ENCODE measurements at regions of chr3 and their contacts with region 1.

Region 1: DNA sequence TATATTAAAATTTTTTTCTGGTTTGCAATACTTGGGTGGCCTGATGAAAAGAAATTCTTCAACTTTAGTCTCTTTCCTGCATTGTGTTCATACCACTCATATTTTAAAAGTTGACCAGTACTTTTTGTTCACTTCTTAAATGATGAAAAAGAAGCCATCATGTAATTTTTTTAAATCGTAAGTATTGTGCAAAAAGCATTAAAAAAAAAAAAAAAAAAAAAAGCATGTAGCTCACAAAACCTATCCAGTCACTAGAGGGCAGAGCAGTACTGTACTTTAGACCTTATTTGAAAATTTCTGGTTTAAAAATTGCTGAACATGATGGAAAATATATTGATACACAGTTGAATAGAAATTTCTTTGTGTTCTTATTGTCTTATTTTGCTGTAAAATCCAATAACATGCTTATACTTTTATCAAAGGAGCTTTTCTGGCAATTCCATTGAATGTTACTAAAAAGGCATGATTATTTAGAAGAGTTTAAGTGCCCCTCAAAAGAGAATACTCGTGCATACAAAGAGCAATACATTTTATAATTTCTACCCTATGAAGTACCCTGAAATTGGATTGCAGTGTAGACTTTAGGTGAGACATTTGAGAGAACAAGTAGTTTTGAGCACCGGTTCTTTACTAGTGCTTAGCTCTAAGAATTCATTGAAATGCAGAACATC is 137.7 kb downstream of the BBX start:
- DNase-seq: peak; percentile 56
- H3K4me3 ChIP-seq: no peak overlapping the region
- H3K27ac ChIP-seq: no peak overlapping the region
- H3K4me1 ChIP-seq: peaks cover 35% of the 10 kb centered on the region
- H3K27me3 ChIP-seq: no peaks in the 10 kb centered on the region
- CTCF ChIP-seq: peak; percentile 34 to 46
- POLR2A ChIP-seq: no peak

Region 2: GRCh38 chr3:107068980-107069379 is 591.5 kb before region 1 on chr3:
- CTCF ChIA-PET with region 1: no interaction called
- POLR2A ChIA-PET with region 1: no interaction called
- dilution Hi-C with region 1: no loop called
- intact Hi-C with region 1: no loop called
- DNase-seq: peak; percentile 73
- H3K4me3 ChIP-seq: no peak overlapping the region
- H3K27ac ChIP-seq: no peak overlapping the region
- H3K4me1 ChIP-seq: peaks cover 14% of the 10 kb centered on the region
- H3K27me3 ChIP-seq: no peaks in the 10 kb centered on the region
- CTCF ChIP-seq: no peak
- POLR2A ChIP-seq: no peak

Region 3: DNA sequence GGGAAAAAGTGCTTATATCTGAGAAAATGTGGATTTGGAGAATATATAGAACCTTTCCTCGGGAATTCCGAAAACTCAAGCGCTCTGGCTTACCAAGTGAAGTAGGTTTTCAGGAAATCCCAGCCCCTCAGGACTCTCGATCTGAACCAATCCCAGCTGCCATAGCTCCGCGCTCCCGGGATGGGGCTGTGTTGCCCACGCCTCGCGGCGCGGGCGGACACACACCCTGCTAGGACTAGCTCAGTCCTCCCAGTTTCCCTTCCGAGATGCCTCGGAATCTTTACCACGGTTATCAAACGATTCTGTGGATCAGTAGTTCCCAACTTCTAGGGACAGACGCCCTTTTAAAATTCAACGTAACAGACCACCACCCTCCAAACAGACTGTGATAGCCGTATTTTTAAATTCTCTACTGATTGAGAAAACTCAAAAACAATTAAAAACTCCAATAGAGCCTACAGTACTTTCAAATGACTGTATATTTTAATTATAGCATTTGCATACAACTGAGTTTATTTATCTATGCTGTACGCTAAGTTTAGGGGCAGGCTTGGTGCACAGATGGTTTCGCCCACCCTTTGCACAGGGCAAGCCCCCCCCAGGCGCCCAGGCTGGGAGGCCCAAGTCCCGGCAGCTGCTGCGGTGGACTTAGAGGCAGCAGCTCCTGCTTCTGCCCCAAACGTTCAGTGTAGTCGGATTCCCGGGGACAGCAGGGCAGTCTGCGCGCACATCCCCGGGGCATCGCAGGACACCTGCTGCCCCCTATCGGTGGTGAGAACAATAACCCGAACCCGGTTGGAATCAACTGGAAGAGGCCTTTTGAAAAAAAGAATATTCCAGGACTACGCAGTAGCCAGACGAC is 230.9 kb before region 1 on chr3:
- CTCF ChIA-PET with region 1: interaction called, 4 read pairs
- POLR2A ChIA-PET with region 1: no interaction called
- dilution Hi-C with region 1: no loop called
- intact Hi-C with region 1: loop called (anchors 10 kb)
- DNase-seq: peak; percentile 83
- H3K4me3 ChIP-seq: peak overlapping the region; percentile 21 to 75 (median 32)
- H3K27ac ChIP-seq: no peak overlapping the region
- H3K4me1 ChIP-seq: peaks cover 20% of the 10 kb centered on the region
- H3K27me3 ChIP-seq: peaks cover 0 to 3% of the 10 kb centered on the region in 2 experiments
- CTCF ChIP-seq: peak; percentile 90 to 92
- POLR2A ChIP-seq: no peak

Region 4: DNA sequence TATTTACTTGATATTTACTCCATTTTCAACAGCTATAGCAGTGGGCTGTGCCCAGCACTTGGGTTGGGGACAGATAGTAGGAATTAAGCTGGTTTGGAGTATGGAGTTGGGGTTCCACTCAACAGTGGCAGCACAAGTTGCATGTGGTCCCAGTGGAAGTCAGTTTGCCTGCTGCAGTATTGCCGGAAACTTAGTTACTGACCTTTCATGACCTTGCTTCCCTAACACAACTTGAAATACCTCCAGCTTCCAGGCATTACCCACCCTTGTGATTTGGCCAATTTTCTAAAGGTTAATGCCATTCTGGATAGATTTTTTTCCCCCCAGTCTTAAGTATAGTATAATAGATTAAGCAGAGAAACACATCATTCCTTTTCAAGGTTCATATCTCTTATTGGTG is 69.7 kb before region 1 on chr3:
- CTCF ChIA-PET with region 1: interaction called, 11 read pairs
- POLR2A ChIA-PET with region 1: no interaction called
- dilution Hi-C with region 1: no loop called
- intact Hi-C with region 1: no loop called
- DNase-seq: peak; percentile 56
- H3K4me3 ChIP-seq: no peak overlapping the region
- H3K27ac ChIP-seq: no peak overlapping the region
- H3K4me1 ChIP-seq: peaks cover 9% of the 10 kb centered on the region
- H3K27me3 ChIP-seq: no peaks in the 10 kb centered on the region
- CTCF ChIP-seq: no peak
- POLR2A ChIP-seq: no peak

Region 5: GRCh38 chr3:107670986-107671385 is 10.5 kb after region 1 on chr3:
- CTCF ChIA-PET with region 1: interaction called, 169 read pairs
- POLR2A ChIA-PET with region 1: no interaction called
- dilution Hi-C with region 1: no loop called
- intact Hi-C with region 1: no loop called
- DNase-seq: no peak
- H3K4me3 ChIP-seq: no peak overlapping the region
- H3K27ac ChIP-seq: no peak overlapping the region
- H3K4me1 ChIP-seq: peaks cover 7% of the 10 kb centered on the region
- H3K27me3 ChIP-seq: no peaks in the 10 kb centered on the region
- CTCF ChIP-seq: no peak
- POLR2A ChIP-seq: no peak

Region 6: GRCh38 chr3:107710851-107711250 is 50.4 kb after region 1 on chr3:
- CTCF ChIA-PET with region 1: interaction called, 10 read pairs
- POLR2A ChIA-PET with region 1: no interaction called
- dilution Hi-C with region 1: no loop called
- intact Hi-C with region 1: no loop called
- DNase-seq: peak; percentile 81
- H3K4me3 ChIP-seq: no peak overlapping the region
- H3K27ac ChIP-seq: no peak overlapping the region
- H3K4me1 ChIP-seq: peaks cover 11% of the 10 kb centered on the region
- H3K27me3 ChIP-seq: no peaks in the 10 kb centered on the region
- CTCF ChIP-seq: no peak
- POLR2A ChIP-seq: no peak

Region 7: DNA sequence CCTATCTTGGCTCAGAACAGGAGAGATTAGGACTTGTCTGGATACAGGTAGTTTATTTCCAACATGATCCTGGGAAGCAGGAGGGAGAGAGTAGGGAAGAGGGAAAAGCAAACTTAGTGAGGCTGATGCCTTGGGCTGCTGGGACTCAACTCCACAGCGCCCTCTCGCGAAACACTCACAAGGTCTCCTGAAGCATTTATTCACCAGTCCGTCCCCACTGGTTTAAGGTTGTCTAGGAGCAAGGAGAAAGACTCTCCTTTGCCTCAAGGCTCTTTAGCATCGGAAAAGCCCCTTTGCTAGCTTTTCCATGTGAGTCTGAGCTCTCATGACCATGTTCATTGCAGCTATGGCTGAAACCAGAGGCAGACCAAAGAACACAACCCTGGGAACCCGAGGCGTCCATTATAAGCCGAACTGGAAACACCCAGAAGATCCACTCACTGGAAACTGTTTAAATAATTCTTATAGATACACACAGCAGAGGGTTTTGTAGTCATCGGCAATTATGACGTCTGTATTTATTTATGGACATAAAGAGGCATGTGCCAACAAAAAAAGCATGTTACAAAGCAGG is 185.9 kb after region 1 on chr3:
- CTCF ChIA-PET with region 1: interaction called, 54 read pairs
- POLR2A ChIA-PET with region 1: no interaction called
- dilution Hi-C with region 1: no loop called
- intact Hi-C with region 1: loop called (anchors 5 kb)
- DNase-seq: peak; percentile 64
- H3K4me3 ChIP-seq: no peak overlapping the region
- H3K27ac ChIP-seq: no peak overlapping the region
- H3K4me1 ChIP-seq: no peaks in the 10 kb centered on the region
- H3K27me3 ChIP-seq: peaks cover 4% of the 10 kb centered on the region in 2 experiments
- CTCF ChIP-seq: peak; percentile 54 to 79
- POLR2A ChIP-seq: no peak